Heart left ventricle (tissue), 16 donors: ENCODE measurements at regions of chr14 and their contacts with region 1.

Region 1: GRCh38 chr14:67695394-67695949 is at the start of gene RDH11:
- DNase-seq: peak; percentile 84 to 90 (median 89)
- ATAC-seq: peak; percentile 97 to 99 (median 99)
- H3K4me3 ChIP-seq: peak within 1 kb of the TSS; percentile 56 to 94 (median 84)
- H3K27ac ChIP-seq: peak within 1 kb of the TSS in 11 of 12 donors; percentile 40 to 84 (median 62)
- H3K4me1 ChIP-seq: peaks cover 0 to 29% (median 7%) of the 10 kb centered on the region in 12 donors
- H3K27me3 ChIP-seq: no peaks in the 10 kb centered on the region
- CTCF ChIP-seq: no peak
- POLR2A ChIP-seq: peak in 1 of 2 donors; percentile 72
- total RNA-seq, gene RDH11: 14.3 to 24.3 (median 17.8) TPM

Region 2: GRCh38 chr14:67526676-67527459 is 168.6 kb before region 1 on chr14:
- intact Hi-C with region 1: loop called in 5 of 10 experiments (anchors 5 to 10 kb)
- DNase-seq: peak in 3 of 5 donors; percentile 13 to 37 (median 24)
- ATAC-seq: peak in 3 of 4 donors; percentile 64 to 76 (median 72)
- H3K4me3 ChIP-seq: no peak overlapping the region
- H3K27ac ChIP-seq: no peak overlapping the region
- H3K4me1 ChIP-seq: no peaks in the 10 kb centered on the region
- H3K27me3 ChIP-seq: peaks cover 0 to 38% (median 0%) of the 10 kb centered on the region in 9 donors
- CTCF ChIP-seq: peak; percentile 31 to 75 (median 57)
- POLR2A ChIP-seq: no peak

Region 3: GRCh38 chr14:67599698-67600561 is 95.5 kb before region 1 on chr14 and contains the start of gene PIGH:
- intact Hi-C with region 1: loop called in 2 of 10 experiments (anchors 2 to 5 kb)
- DNase-seq: peak; percentile 89 to 96 (median 92)
- ATAC-seq: peak; percentile 98 to 100 (median 99)
- H3K4me3 ChIP-seq: peak within 1 kb of the TSS; percentile 55 to 99 (median 83)
- H3K27ac ChIP-seq: peak within 1 kb of the TSS; percentile 15 to 93 (median 85)
- H3K4me1 ChIP-seq: peaks cover 0 to 16% (median 6%) of the 10 kb centered on the region in 12 donors
- H3K27me3 ChIP-seq: no peaks in the 10 kb centered on the region
- CTCF ChIP-seq: peak; percentile 32 to 77 (median 58)
- POLR2A ChIP-seq: peak in 1 of 2 donors; percentile 79
- total RNA-seq, gene PIGH: 8.0 to 21.3 (median 11.4) TPM

Region 4: DNA sequence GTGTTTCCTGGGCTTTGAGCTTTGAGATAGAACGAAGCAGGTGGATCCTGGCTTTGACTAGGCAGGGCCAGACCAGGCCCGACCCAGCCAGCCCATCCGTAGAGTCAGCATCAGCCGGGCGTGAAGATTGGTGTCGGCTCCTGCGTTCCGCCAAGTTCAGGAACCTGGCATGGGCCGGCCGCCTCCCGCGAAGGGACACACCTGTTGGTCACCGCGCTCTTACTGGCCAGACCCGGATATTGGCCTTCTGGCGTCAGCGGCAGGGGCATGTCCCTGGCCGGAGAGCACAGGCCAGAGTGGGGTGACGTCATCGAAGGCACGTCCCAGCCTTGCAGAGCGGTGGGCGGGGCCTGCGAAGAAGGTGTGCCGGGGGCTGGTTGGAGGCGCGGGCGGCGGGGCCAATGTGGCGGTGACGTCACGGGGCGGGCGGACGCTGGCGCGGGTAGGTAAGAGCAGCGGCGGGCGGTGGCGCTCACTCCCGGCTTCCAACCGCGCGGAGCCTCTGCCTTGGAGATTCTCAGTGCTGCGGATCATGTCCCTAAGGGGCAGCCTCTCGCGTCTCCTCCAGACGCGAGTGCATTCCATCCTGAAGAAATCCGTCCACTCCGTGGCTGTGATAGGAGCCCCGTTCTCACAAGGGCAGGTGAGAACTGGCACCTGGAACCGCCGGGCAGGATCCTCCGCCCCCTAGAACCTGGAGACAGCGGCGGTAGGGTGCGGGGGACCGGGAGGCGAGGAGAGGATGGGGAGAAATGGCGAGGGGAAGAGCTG is 75.8 kb before region 1 on chr14 and contains the start of gene ARG2:
- intact Hi-C with region 1: loop called in 4 of 10 experiments (anchors 2 to 10 kb)
- DNase-seq: peak; percentile 96 to 98 (median 97)
- ATAC-seq: peak; percentile 93 to 99 (median 98)
- H3K4me3 ChIP-seq: peak within 1 kb of the TSS; percentile 31 to 74 (median 67)
- H3K27ac ChIP-seq: peak within 1 kb of the TSS in 6 of 12 donors; percentile 11 to 76 (median 49)
- H3K4me1 ChIP-seq: peaks cover 0 to 32% (median 11%) of the 10 kb centered on the region in 12 donors
- H3K27me3 ChIP-seq: no peaks in the 10 kb centered on the region
- CTCF ChIP-seq: peak in 3 of 12 donors; percentile 5 to 22 (median 21)
- POLR2A ChIP-seq: peak in 1 of 2 donors; percentile 48
- total RNA-seq, gene ARG2: 0.61 to 6.3 (median 1.5) TPM

Region 5: GRCh38 chr14:67650694-67651093 is 44.8 kb before region 1 on chr14:
- intact Hi-C with region 1: no loop called
- DNase-seq: no peak
- ATAC-seq: no peak
- H3K4me3 ChIP-seq: no peak overlapping the region
- H3K27ac ChIP-seq: no peak overlapping the region
- H3K4me1 ChIP-seq: peaks cover 0 to 5% (median 0%) of the 10 kb centered on the region in 12 donors
- H3K27me3 ChIP-seq: no peaks in the 10 kb centered on the region
- CTCF ChIP-seq: no peak
- POLR2A ChIP-seq: no peak

Region 6: GRCh38 chr14:67674481-67675169 is 20.8 kb before region 1 on chr14 and contains the start of gene VTI1B:
- intact Hi-C with region 1: loop called in 2 of 10 experiments (anchors 2 kb)
- DNase-seq: peak; percentile 83 to 90 (median 88)
- ATAC-seq: peak; percentile 85 to 98 (median 96)
- H3K4me3 ChIP-seq: peak within 1 kb of the TSS; percentile 78 to 100 (median 92)
- H3K27ac ChIP-seq: peak within 1 kb of the TSS; percentile 96 to 99 (median 99)
- H3K4me1 ChIP-seq: peaks cover 3 to 44% (median 22%) of the 10 kb centered on the region in 12 donors
- H3K27me3 ChIP-seq: no peaks in the 10 kb centered on the region
- CTCF ChIP-seq: peak in 4 of 12 donors; percentile 22 to 47 (median 30)
- POLR2A ChIP-seq: peak in 1 of 2 donors; percentile 65
- total RNA-seq, gene VTI1B: 78.5 to 143 (median 128) TPM